ENCODE measurements at regions of chr2 and their contacts with region 1.

Region 1: GRCh38 chr2:41914936-41915335 is 132.9 kb upstream of the PKDCC start:
- DNase-seq: no peak
- H3K4me3 Mint-ChIP-seq: no peak overlapping the region
- H3K27ac Mint-ChIP-seq: no peak overlapping the region
- H3K4me1 Mint-ChIP-seq: no peaks in the 10 kb centered on the region
- H3K27me3 Mint-ChIP-seq: no peaks in the 10 kb centered on the region

Region 2: DNA sequence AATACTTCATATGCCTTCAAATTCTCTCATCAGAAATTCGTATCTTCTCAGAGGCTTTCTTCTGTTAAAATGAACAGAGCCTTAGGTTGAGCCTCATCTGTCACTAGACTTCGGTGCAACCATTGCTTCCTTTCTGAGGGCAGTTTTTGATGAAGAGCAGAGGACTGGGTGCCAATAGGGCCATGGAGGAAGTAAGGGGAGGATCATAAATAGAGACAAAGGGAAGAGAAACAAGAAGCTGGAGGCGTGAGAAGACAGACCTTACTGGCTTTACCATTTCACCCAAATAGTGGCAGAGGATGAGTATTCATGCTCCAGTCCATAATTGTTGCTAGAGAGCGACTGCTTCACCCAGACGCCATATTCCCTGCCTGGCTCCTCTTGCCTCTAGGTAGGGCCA is 82.7 kb before region 1 on chr2:
- CTCF ChIA-PET with region 1: no interaction called
- POLR2A ChIA-PET with region 1: no interaction called
- intact Hi-C with region 1: loop called (anchors 5 kb)
- DNase-seq: no peak
- H3K4me3 Mint-ChIP-seq: no peak overlapping the region
- H3K27ac Mint-ChIP-seq: no peak overlapping the region
- H3K4me1 Mint-ChIP-seq: no peaks in the 10 kb centered on the region
- H3K27me3 Mint-ChIP-seq: peaks cover 38% of the 10 kb centered on the region

Measured in activated CD4-positive, alpha-beta memory T cell treated with anti-CD3 and anti-CD28 coated beads for 36 hours (primary cell).